Aorta (tissue), 5 donors: ENCODE measurements at regions of chr11 and their contacts with region 1.

Region 1: DNA sequence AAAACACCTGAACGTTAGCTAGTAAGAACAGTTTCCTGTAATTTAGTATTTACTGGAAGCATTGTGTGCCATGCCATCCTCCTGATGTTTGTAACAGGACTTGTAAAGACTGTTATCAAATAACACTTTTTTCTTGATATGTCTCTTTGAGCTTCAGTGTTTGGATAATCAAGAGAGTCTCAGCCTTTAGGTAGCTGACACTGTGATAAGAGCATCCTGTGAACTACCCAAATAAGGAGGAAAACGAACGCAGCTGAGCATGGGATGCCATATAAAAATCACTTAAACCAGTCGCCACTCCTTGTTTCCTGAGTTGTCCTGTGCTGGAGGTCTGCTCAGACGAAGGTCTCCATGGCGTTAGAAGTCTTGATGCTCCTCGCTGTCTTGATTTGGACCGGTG is at the start of gene OOSP2:
- DNase-seq: no peak
- ATAC-seq: no peak
- H3K4me3 ChIP-seq: no peak within 1 kb of the TSS
- H3K27ac ChIP-seq: no peak within 1 kb of the TSS
- H3K4me1 ChIP-seq: no peaks in the 10 kb centered on the region
- H3K27me3 ChIP-seq: no peaks in the 10 kb centered on the region
- total RNA-seq, gene OOSP2: not detected

Region 2: DNA sequence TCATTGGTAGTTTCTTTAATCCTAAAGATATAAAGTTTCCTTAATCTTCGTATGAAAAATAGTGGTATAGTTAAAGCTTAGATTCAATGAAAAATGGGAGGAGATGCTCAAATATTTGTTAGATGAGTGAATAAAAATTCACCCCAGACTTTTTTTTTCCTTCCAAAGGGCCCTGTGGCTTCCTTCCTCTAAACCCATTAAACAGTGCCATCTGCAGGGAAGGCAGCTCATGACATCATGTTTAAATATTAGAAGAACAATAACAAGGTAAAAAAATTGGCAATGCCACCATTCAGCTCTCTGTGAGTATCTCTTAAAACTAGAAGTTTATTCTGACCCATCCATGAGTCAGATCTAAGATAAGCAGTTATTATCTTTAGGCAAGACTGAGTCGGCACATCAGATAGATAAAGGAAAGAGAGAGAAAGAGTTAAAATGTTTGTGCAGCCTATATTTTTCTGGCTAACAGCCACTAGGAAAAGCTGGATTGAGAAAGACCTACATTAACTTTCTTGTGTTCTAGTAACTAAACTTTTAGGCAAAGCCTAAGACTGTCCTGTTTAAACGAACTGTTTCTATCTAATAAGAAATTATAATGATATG is 121.0 kb before region 1 on chr11:
- intact Hi-C with region 1: no loop called
- DNase-seq: no peak
- ATAC-seq: no peak
- H3K4me3 ChIP-seq: no peak overlapping the region
- H3K27ac ChIP-seq: no peak overlapping the region
- H3K4me1 ChIP-seq: no peaks in the 10 kb centered on the region
- H3K27me3 ChIP-seq: no peaks in the 10 kb centered on the region

Region 3: DNA sequence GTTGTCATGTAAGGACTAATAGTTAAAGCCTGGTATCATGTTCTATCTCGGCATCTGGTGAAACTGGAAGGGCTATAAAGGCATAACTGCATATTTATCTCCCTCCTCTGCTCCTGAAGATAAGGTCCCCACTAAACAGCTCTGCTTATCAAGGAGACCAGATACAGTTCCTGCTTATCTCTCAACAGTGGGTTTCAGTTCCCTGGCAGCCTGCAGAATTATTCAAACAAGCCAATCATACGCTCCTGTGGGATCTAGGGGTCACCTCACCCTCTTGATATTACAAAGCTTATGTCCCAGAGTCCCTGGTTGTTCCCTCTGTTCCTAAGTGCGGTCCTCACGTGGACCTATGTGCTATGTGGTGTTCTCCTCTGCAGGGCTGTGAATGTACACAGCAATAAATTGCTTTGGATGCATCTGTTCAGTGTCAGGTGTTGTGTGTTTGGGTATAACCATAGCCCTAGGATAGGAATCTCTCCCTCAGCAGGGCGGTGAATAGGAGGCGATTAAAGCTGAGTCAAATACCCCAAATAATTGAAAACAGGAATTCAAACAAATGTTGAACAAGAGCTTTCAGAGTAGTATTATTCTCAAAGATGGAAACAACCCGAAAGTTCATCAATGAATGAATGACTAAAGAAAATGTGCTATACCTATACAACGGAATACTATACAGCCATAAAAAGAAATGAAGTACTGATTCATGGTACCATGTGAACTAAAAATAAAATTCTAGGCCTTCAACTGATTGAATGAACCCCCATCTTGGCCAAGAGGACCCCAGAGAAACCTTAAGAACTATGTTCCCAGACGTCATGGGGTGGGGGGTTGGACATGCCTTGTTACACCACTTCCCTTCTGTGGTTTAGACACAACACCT is 79.4 kb before region 1 on chr11:
- intact Hi-C with region 1: no loop called
- DNase-seq: no peak
- ATAC-seq: no peak
- H3K4me3 ChIP-seq: no peak overlapping the region
- H3K27ac ChIP-seq: no peak overlapping the region
- H3K4me1 ChIP-seq: no peaks in the 10 kb centered on the region
- H3K27me3 ChIP-seq: no peaks in the 10 kb centered on the region

Region 4: DNA sequence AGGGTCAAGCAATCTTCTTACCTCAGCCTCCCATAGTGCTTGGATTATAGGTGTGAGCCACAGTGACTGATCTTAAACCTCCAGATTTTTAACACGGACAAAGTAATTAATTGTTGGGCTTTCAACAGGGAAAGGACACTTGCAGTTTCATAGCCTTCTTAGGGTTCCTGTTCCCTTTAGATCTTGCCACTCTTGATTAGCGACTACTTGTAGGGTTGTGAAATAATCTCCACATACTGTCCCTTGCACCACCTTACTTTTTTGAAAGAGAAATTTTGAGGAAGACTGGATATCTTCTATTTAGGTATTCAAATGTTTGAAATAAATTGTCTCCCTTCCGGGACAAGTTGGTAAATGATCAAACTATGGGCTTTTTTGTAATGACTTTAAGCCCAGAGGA is 195.2 kb after region 1 on chr11:
- intact Hi-C with region 1: loop called in 1 of 2 experiments (anchors 10 kb)
- DNase-seq: no peak
- ATAC-seq: no peak
- H3K4me3 ChIP-seq: no peak overlapping the region
- H3K27ac ChIP-seq: no peak overlapping the region
- H3K4me1 ChIP-seq: no peaks in the 10 kb centered on the region
- H3K27me3 ChIP-seq: no peaks in the 10 kb centered on the region